ENCODE measurements at regions of chr6 and their contacts with region 1.

Region 1: GRCh38 chr6:50135968-50136367 is 86.2 kb upstream of the DEFB112 start:
- DNase-seq: no peak
- ATAC-seq: no peak
- H3K4me3 ChIP-seq: no peak overlapping the region
- H3K27ac ChIP-seq: no peak overlapping the region
- H3K4me1 ChIP-seq: no peaks in the 10 kb centered on the region
- H3K27me3 ChIP-seq: peaks cover 0 to 7% (median 0%) of the 10 kb centered on the region in 9 donors
- CTCF ChIP-seq: no peak
- POLR2A ChIP-seq: no peak

Region 2: DNA sequence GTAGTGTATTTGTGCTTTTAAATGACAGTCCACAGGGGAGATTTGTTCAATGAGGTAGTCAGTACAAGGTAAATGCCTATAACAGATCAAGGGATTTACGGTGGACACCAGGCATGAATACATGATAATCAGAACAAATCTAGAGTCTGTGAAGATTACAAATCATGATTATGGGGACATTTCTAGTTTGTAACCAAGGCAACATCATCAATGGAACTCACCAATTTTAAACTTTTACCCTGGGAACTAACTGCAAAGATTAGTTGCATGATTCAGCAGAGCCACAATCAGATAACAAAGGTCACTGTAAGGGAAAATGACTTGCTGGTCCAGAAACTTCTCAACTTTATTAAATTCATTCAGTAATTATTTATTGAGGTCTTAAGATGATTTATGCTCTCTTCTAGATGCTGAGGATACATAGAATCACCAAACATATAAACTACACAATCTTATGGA is 269.5 kb before region 1 on chr6 and contains the start of gene CRISP1:
- intact Hi-C with region 1: no loop called
- DNase-seq: no peak
- ATAC-seq: no peak
- H3K4me3 ChIP-seq: no peak within 1 kb of the TSS
- H3K27ac ChIP-seq: no peak within 1 kb of the TSS
- H3K4me1 ChIP-seq: no peaks in the 10 kb centered on the region
- H3K27me3 ChIP-seq: no peaks in the 10 kb centered on the region
- CTCF ChIP-seq: no peak
- POLR2A ChIP-seq: no peak
- total RNA-seq, gene CRISP1: not detected

Region 3: DNA sequence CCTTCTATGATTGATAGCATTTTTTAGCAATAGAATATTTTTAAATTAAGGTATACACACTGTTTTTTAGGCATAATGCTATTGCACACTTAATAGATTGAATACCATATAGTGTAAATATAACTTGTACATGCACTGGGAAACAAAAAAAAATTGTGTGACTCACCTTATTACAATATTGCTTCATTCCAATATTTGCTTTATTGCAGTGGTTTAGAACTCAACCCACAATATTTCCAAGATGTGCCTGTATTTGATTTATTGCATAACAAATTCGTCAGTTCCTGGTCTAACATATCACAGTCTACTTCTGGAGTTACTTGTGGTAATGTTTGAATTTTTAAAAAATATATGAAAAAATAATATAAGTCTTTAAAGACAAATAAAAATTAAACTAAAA is 44.3 kb before region 1 on chr6:
- intact Hi-C with region 1: no loop called
- DNase-seq: no peak
- ATAC-seq: no peak
- H3K4me3 ChIP-seq: no peak overlapping the region
- H3K27ac ChIP-seq: no peak overlapping the region
- H3K4me1 ChIP-seq: no peaks in the 10 kb centered on the region
- H3K27me3 ChIP-seq: no peaks in the 10 kb centered on the region
- CTCF ChIP-seq: no peak
- POLR2A ChIP-seq: no peak

Region 4: GRCh38 chr6:50102676-50103075 is 33.3 kb before region 1 on chr6:
- intact Hi-C with region 1: no loop called
- DNase-seq: no peak
- ATAC-seq: no peak
- H3K4me3 ChIP-seq: no peak overlapping the region
- H3K27ac ChIP-seq: no peak overlapping the region
- H3K4me1 ChIP-seq: no peaks in the 10 kb centered on the region
- H3K27me3 ChIP-seq: no peaks in the 10 kb centered on the region
- CTCF ChIP-seq: no peak
- POLR2A ChIP-seq: no peak

Region 5: DNA sequence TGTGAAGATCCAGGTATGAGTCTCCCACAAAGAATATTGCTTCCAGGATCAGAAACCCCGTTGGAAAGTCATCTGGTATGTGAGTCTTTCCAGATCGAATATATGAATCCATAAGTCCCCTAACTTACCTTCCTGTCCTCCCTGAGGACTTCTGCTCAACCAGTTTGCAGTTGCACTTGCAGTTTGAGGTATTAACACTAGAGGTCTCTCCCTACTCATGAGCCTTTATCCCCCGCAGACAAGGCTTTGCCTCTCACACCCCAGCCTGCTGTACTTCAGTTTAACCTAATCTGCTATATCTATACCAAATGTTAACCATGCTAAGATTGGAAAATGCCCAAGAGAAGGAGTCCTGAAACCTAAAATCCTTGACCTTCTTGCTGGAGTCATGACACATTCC is 49.0 kb after region 1 on chr6:
- intact Hi-C with region 1: no loop called
- DNase-seq: no peak
- ATAC-seq: no peak
- H3K4me3 ChIP-seq: no peak overlapping the region
- H3K27ac ChIP-seq: no peak overlapping the region
- H3K4me1 ChIP-seq: no peaks in the 10 kb centered on the region
- H3K27me3 ChIP-seq: no peaks in the 10 kb centered on the region
- CTCF ChIP-seq: peak in 2 of 12 donors; percentile 17
- POLR2A ChIP-seq: no peak

Region 6: DNA sequence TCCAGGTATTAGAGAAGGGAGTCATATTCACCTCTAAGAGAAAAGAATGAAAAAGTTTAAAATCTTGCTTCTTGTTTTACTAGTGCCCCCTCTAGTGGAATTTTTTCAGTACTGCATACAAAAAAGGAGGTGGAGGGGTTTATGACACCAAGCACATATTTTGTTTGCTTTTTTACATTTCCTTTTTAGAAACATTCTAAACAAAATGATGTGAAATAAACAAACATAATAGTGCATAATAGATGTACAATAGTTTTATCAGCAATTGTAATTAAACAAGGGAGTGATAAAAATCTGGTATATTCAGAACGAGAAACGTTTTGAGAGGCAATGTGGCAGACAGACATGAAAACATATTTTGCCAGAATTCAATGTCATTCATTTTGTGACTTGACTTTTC is 466.3 kb after region 1 on chr6:
- intact Hi-C with region 1: loop called in 1 of 10 experiments (anchors 10 kb)
- DNase-seq: no peak
- ATAC-seq: no peak
- H3K4me3 ChIP-seq: no peak overlapping the region
- H3K27ac ChIP-seq: no peak overlapping the region
- H3K4me1 ChIP-seq: no peaks in the 10 kb centered on the region
- H3K27me3 ChIP-seq: peaks cover 0 to 4% (median 0%) of the 10 kb centered on the region in 9 donors
- CTCF ChIP-seq: peak; percentile 65 to 86 (median 74)
- POLR2A ChIP-seq: no peak